Right ventricle myocardium superior (tissue), 1 donor: ENCODE measurements at regions of chr6 and their contacts with region 1.

Region 1: DNA sequence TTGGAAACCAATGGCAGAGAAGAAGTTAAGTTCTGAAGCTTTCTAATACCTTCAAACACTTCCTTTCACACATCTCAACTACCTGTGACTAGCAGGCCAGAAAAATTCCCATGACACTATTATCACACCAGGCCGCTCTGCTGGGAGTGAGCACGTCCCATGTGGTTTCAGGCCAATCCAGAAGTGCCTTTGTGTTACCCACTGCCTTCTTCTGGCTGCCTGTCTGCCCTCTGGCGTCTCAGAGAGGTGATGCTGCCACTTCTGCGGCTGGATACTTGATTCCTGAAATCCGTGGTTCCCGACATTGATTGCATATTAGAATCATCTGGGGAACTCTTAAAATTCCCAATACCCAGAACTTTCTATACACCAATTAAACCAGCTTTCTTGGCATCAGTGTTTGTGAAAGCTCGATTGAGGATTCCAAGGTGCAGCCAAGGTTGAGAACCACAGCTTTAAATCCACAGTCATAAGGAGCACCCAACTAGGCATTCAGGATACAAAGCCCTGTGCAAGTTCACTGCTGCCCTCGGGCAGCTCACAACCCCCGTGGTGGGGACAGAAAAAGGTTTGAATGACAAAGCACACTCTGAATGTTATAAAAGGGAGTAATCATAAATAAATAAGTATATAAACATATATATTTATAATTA is 65.6 kb downstream of the STMND1 start:
- DNase-seq: peak; percentile 71
- ATAC-seq: peak; percentile 94

Region 2: DNA sequence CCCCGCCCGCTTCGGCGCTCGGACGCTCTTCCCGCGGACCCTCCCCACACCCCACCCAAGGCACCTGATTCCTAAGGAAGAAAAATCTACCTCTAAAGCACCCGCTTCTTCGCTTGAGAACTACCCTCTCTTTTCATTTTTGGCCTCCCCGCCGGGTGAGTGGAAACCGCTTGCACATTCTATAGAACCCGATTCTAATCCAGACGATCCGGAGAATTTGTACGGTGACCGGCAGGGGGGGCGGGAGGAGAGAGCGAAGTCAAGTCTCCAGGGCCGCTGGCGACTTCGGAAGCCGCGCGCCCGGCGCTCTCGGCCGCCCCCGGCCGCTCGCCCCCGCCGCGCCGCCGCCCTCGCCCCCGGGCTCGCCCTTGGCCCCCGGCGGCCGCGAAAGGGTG is 113.6 kb after region 1 on chr6 and contains the start of gene RBM24:
- intact Hi-C with region 1: loop called (anchors 10 kb)
- DNase-seq: peak; percentile 66
- ATAC-seq: no peak
- total RNA-seq, gene RBM24: 187 TPM

Region 3: DNA sequence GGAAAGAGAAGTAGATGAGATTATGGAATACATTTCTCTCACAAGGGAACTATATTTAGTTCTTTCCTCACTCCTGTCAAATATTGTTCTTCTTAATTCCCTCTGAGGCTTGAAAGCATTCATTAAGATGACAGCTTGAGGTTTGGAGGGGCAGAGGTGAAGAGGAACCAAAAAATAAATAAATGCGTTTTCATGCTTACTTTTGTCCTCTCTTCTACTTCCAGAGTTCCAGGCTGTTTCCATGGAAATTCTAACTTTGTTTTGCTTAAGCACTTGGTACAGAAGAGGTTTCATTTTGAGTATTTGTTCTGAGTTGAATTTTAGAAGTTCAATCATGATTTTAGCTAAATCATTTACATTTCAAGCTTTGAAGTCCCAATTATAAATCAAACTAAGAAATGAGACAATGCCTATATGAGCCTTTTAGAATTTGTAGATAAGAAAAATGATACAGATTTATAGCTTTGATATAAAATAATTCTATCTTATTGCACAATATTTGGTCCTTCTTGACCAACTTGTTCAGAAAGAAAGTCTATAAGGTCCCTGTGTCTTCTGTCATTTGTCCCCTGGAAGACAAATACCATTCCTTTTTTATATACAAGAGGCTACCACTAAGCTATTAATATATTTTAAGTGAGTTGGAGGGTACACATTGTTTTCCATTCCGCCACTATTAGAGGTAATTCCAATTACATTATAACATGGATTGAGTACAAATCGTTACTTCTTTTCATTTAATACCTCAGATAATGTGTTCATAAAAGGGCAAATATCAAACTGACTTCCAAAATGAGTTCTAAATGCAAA is 130.0 kb after region 1 on chr6:
- intact Hi-C with region 1: no loop called
- DNase-seq: no peak
- ATAC-seq: peak; percentile 36

Region 4: DNA sequence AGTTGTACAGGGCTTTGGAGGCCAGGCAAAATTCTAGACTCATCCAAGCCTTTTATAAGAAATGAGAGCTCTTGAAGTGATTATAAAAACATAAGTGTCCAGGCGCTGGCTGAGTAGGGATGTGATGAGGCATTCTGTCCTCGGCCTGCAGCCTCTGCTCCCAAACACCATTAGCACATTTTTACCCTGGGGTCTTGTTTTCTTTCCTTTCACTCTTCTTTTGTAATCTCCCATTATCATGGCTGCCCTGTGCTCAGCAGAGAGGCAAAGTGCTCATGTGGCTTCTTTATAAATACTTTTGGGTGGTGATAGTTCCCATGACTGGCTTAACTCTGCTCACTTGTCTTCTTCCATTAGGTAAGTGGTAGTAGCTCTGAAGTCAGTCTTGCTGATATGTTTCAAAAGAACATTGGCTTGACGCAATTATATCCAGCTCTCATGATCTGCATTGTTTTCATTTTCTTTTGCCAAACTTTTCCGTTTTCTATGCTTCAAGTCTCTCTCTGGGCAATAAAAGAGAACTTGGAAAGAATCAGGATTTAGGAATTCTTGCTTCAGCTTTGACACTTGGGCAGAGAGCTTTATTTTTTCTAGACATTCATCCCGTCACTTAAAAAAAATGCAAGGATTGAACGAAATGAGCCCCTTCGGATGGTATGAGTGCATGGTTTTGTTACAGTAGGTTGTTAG is 287.0 kb after region 1 on chr6:
- intact Hi-C with region 1: no loop called
- DNase-seq: no peak
- ATAC-seq: peak; percentile 53